ENCODE measurements at regions of chr2 and their contacts with region 1.

Region 1: GRCh38 chr2:191566344-191566743 is 111.6 kb upstream of the NABP1 start:
- DNase-seq: peak; percentile 85
- ATAC-seq: peak; percentile 62
- H3K4me3 Mint-ChIP-seq: no peak overlapping the region
- H3K27ac Mint-ChIP-seq: no peak overlapping the region
- H3K4me1 Mint-ChIP-seq: peaks cover 21% of the 10 kb centered on the region
- H3K27me3 Mint-ChIP-seq: peaks cover 35% of the 10 kb centered on the region
- CTCF ChIP-seq: peak; percentile 75

Region 2: DNA sequence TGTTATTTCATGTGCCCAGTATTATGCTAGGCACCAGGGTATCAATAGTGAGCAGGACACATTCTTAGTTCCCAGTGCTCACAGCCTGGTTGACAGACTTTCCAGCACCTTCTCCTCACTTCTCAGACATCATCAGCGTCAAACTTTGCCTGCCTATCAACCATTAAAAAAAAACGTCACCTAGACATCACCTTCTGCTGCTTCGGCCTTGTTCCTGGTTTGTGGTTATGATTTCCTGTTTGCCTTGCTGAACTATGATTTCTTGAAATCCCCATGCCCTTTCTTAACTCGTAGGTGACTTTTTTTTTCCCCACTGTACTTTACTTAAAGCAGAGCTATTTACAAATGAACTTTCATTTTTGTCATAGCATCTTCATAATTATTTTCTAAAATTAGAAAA is 51.2 kb after region 1 on chr2:
- CTCF ChIA-PET with region 1: interaction called, 5 read pairs
- POLR2A ChIA-PET with region 1: no interaction called
- intact Hi-C with region 1: loop called (anchors 5 kb)
- DNase-seq: peak; percentile 65
- ATAC-seq: peak; percentile 85
- H3K4me3 Mint-ChIP-seq: peak overlapping the region; percentile 18
- H3K27ac Mint-ChIP-seq: peak overlapping the region; percentile 99
- H3K4me1 Mint-ChIP-seq: peaks cover 60% of the 10 kb centered on the region
- H3K27me3 Mint-ChIP-seq: no peaks in the 10 kb centered on the region
- CTCF ChIP-seq: no peak

Region 3: GRCh38 chr2:191637182-191638078 is 71.1 kb after region 1 on chr2:
- CTCF ChIA-PET with region 1: interaction called, 9 read pairs
- POLR2A ChIA-PET with region 1: interaction called, 4 read pairs
- intact Hi-C with region 1: loop called (anchors 5 kb)
- DNase-seq: peak; percentile 28
- ATAC-seq: peak; percentile 83
- H3K4me3 Mint-ChIP-seq: peak overlapping the region; percentile 9
- H3K27ac Mint-ChIP-seq: peak overlapping the region; percentile 87
- H3K4me1 Mint-ChIP-seq: peaks cover 50% of the 10 kb centered on the region
- H3K27me3 Mint-ChIP-seq: no peaks in the 10 kb centered on the region
- CTCF ChIP-seq: no peak

Region 4: GRCh38 chr2:191691016-191691735 is 124.8 kb after region 1 on chr2:
- CTCF ChIA-PET with region 1: interaction called, 22 read pairs
- POLR2A ChIA-PET with region 1: interaction called, 3 read pairs
- intact Hi-C with region 1: loop called (anchors 2 kb)
- DNase-seq: peak; percentile 72
- ATAC-seq: peak; percentile 74
- H3K4me3 Mint-ChIP-seq: no peak overlapping the region
- H3K27ac Mint-ChIP-seq: no peak overlapping the region
- H3K4me1 Mint-ChIP-seq: peaks cover 57% of the 10 kb centered on the region
- H3K27me3 Mint-ChIP-seq: no peaks in the 10 kb centered on the region
- CTCF ChIP-seq: peak; percentile 60